ENCODE measurements at regions of chr14 and their contacts with region 1.

Region 1: GRCh38 chr14:94581127-94581999 is at the start of gene SERPINA5:
- DNase-seq: peak; percentile 7
- H3K4me3 ChIP-seq: no peak within 1 kb of the TSS
- H3K27ac ChIP-seq: no peak within 1 kb of the TSS
- H3K4me1 ChIP-seq: no peaks in the 10 kb centered on the region
- H3K27me3 ChIP-seq: no peaks in the 10 kb centered on the region
- CTCF ChIP-seq: no peak
- total RNA-seq, gene SERPINA5: 1.7 TPM in 1 of 2 donors, not detected in the other

Region 2: DNA sequence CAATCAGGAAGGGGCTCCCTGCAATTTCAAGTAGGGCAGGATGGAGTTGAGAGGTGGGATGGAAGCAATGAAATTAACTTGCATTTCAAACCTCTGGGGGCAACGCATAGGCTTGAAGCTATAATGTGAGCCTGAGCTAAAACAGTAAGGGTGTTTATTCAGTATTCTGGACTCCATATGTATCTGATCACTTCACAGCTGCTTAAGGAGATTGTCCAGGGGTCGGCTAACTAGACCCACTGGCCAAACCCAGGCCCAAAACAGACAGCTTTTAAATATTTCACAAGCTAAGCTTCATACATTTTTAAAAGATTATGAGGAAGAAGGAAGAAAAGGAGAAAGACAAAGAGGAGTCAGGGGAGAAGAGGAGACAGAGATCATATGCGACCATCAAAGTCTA is 24.0 kb after region 1 on chr14:
- CTCF ChIA-PET with region 1: no interaction called
- dilution Hi-C with region 1: no loop called
- in situ Hi-C with region 1: no loop called
- intact Hi-C with region 1: no loop called
- DNase-seq: no peak
- H3K4me3 ChIP-seq: no peak overlapping the region
- H3K27ac ChIP-seq: no peak overlapping the region
- H3K4me1 ChIP-seq: peaks cover 32% of the 10 kb centered on the region
- H3K27me3 ChIP-seq: no peaks in the 10 kb centered on the region
- CTCF ChIP-seq: no peak

Region 3: GRCh38 chr14:94646481-94646880 is 65.1 kb after region 1 on chr14:
- CTCF ChIA-PET with region 1: no interaction called
- dilution Hi-C with region 1: loop called (anchors 10 kb)
- in situ Hi-C with region 1: no loop called
- intact Hi-C with region 1: no loop called
- DNase-seq: peak; percentile 38
- H3K4me3 ChIP-seq: no peak overlapping the region
- H3K27ac ChIP-seq: no peak overlapping the region
- H3K4me1 ChIP-seq: peaks cover 8% of the 10 kb centered on the region
- H3K27me3 ChIP-seq: no peaks in the 10 kb centered on the region
- CTCF ChIP-seq: no peak

Measured in mammary epithelial cell (primary cell).